Heart right ventricle (tissue), 16 donors: ENCODE measurements at regions of chr7 and their contacts with region 1.

Region 1: GRCh38 chr7:89826557-89826956 is 327.7 kb upstream of the STEAP1 start:
- DNase-seq: no peak
- ATAC-seq: no peak
- H3K4me3 ChIP-seq: no peak overlapping the region
- H3K27ac ChIP-seq: no peak overlapping the region
- H3K4me1 ChIP-seq: no peaks in the 10 kb centered on the region
- H3K27me3 ChIP-seq: no peaks in the 10 kb centered on the region
- CTCF ChIP-seq: no peak

Region 2: GRCh38 chr7:89943525-89944050 is 117.0 kb after region 1 on chr7:
- intact Hi-C with region 1: no loop called
- DNase-seq: no peak
- ATAC-seq: no peak
- H3K4me3 ChIP-seq: no peak overlapping the region
- H3K27ac ChIP-seq: no peak overlapping the region
- H3K4me1 ChIP-seq: no peaks in the 10 kb centered on the region
- H3K27me3 ChIP-seq: no peaks in the 10 kb centered on the region
- CTCF ChIP-seq: no peak

Region 3: GRCh38 chr7:90625562-90625961 is 799.0 kb after region 1 on chr7:
- intact Hi-C with region 1: no loop called
- DNase-seq: peak in 1 of 2 donors; percentile 30
- ATAC-seq: peak in 6 of 8 donors; percentile 21 to 44 (median 34)
- H3K4me3 ChIP-seq: peak overlapping the region in 1 of 10 donors; percentile 1
- H3K27ac ChIP-seq: peak overlapping the region in 4 of 10 donors; percentile 11 to 43 (median 34)
- H3K4me1 ChIP-seq: peaks cover 4 to 58% (median 38%) of the 10 kb centered on the region in 9 donors
- H3K27me3 ChIP-seq: no peaks in the 10 kb centered on the region
- CTCF ChIP-seq: no peak

Region 4: DNA sequence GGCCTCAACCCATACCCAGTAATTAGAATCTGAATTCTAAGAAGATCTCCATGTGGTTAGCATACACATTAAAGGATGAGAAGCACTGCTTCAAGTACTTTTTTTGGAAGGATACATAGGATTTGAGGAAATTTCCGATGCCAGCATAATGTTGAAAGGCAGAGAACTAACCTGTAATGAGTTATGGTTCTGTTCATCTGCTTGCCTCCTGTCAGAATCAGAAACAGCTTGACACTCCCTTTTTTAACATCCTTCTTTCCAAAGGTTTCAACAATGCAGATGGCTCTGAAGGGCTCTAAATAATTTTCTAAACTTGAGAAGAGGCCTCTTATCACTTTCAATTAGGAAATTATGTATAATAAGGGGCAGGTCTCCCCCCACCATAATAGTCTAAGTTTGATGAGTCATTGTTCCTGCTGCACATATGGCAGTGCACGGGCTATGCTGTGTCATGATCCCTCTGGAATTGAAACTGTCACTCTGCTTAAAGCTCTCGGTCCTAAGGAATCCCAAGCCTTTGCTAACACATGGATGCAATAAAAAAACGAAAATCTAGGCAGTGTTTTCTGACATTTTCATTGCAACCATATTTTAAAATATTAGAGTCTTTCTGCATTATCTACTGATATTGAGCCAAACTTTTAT is 1146.5 kb after region 1 on chr7:
- intact Hi-C with region 1: loop called in 1 of 10 experiments (anchors 5 kb)
- DNase-seq: no peak
- ATAC-seq: no peak
- H3K4me3 ChIP-seq: no peak overlapping the region
- H3K27ac ChIP-seq: no peak overlapping the region
- H3K4me1 ChIP-seq: no peaks in the 10 kb centered on the region
- H3K27me3 ChIP-seq: no peaks in the 10 kb centered on the region
- CTCF ChIP-seq: no peak